CD4-positive, alpha-beta T cell (primary cell): ENCODE measurements at regions of chr5 and their contacts with region 1.

Region 1: DNA sequence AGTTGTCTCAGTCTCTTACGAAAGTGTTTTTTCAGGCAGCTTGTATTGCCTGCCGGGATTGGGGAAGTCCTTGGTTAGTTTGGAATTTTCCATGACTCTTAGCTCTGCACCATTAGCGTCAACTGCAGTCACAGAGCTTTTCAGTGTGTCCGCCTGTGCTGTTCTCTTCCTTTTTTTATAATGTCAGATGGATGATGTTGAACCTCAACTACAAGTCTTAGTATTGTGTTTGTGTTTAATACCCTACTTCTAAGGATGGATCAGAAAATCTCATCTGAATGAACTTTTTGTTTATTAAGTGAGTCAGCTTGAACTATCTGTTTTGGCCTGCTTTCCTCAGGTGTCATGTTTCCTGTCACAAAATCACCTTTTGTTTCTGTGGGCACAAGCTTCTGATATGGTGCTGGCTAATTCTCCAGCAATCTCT is 33.1 kb downstream of the ATP6V0E1 start:
- DNase-seq: peak in 2 of 14 experiments; percentile 38 to 57
- ATAC-seq: no peak
- H3K4me3 ChIP-seq: no peak overlapping the region
- H3K4me3 Mint-ChIP-seq: no peak overlapping the region
- H3K27ac ChIP-seq: no peak overlapping the region
- H3K27ac Mint-ChIP-seq: peak overlapping the region; percentile 50
- H3K4me1 ChIP-seq: peaks cover 14% of the 10 kb centered on the region
- H3K4me1 Mint-ChIP-seq: peaks cover 61% of the 10 kb centered on the region
- H3K27me3 ChIP-seq: no peaks in the 10 kb centered on the region
- H3K27me3 Mint-ChIP-seq: no peaks in the 10 kb centered on the region
- CTCF ChIP-seq: no peak

Region 2: GRCh38 chr5:173051746-173052145 is 35.1 kb after region 1 on chr5:
- CTCF ChIA-PET with region 1: no interaction called
- POLR2A ChIA-PET with region 1: no interaction called
- intact Hi-C with region 1: loop called in 1 of 2 experiments (anchors 5 kb)
- DNase-seq: no peak
- ATAC-seq: no peak
- H3K4me3 ChIP-seq: no peak overlapping the region
- H3K4me3 Mint-ChIP-seq: no peak overlapping the region
- H3K27ac ChIP-seq: no peak overlapping the region
- H3K27ac Mint-ChIP-seq: no peak overlapping the region
- H3K4me1 ChIP-seq: peaks cover 9% of the 10 kb centered on the region
- H3K4me1 Mint-ChIP-seq: peaks cover 27% of the 10 kb centered on the region
- H3K27me3 ChIP-seq: no peaks in the 10 kb centered on the region
- H3K27me3 Mint-ChIP-seq: no peaks in the 10 kb centered on the region
- CTCF ChIP-seq: no peak

Region 3: DNA sequence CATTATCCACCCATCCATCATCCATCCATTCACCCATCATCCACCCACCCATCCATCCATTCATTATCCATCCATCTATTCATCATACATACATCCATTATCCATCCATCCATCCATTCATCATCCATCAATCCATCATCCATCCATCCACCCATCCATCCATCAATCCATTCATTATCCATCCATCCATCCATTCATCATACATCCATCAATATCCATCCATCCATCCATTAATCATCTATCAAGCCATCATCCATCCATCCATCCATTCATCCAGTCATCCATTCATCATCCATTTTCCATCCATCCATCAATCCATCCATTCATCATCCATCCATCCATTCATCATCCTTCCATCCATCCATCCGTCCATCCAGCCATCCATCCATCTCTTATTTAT is 1117.9 kb after region 1 on chr5:
- CTCF ChIA-PET with region 1: no interaction called
- POLR2A ChIA-PET with region 1: no interaction called
- intact Hi-C with region 1: no loop called
- DNase-seq: no peak
- ATAC-seq: no peak
- H3K4me3 ChIP-seq: no peak overlapping the region
- H3K4me3 Mint-ChIP-seq: no peak overlapping the region
- H3K27ac ChIP-seq: no peak overlapping the region
- H3K27ac Mint-ChIP-seq: no peak overlapping the region
- H3K4me1 ChIP-seq: no peaks in the 10 kb centered on the region
- H3K4me1 Mint-ChIP-seq: no peaks in the 10 kb centered on the region
- H3K27me3 ChIP-seq: no peaks in the 10 kb centered on the region
- H3K27me3 Mint-ChIP-seq: no peaks in the 10 kb centered on the region
- CTCF ChIP-seq: no peak